ENCODE measurements at regions of chr16 and their contacts with region 1.

Region 1: GRCh38 chr16:87778830-87779579 is 13.2 kb upstream of the KLHDC4 start:
- DNase-seq: peak; percentile 90 to 91 (median 90)
- ATAC-seq: peak; percentile 90 to 94 (median 92)
- H3K4me3 ChIP-seq: peak overlapping the region in 1 of 3 donors; percentile 21
- H3K27ac ChIP-seq: peak overlapping the region in 1 of 3 donors; percentile 29
- H3K4me1 ChIP-seq: peaks cover 0 to 13% (median 4%) of the 10 kb centered on the region in 4 donors
- H3K27me3 ChIP-seq: no peaks in the 10 kb centered on the region
- CTCF ChIP-seq: peak; percentile 98 to 100 (median 98)
- POLR2A ChIP-seq: no peak

Region 2: DNA sequence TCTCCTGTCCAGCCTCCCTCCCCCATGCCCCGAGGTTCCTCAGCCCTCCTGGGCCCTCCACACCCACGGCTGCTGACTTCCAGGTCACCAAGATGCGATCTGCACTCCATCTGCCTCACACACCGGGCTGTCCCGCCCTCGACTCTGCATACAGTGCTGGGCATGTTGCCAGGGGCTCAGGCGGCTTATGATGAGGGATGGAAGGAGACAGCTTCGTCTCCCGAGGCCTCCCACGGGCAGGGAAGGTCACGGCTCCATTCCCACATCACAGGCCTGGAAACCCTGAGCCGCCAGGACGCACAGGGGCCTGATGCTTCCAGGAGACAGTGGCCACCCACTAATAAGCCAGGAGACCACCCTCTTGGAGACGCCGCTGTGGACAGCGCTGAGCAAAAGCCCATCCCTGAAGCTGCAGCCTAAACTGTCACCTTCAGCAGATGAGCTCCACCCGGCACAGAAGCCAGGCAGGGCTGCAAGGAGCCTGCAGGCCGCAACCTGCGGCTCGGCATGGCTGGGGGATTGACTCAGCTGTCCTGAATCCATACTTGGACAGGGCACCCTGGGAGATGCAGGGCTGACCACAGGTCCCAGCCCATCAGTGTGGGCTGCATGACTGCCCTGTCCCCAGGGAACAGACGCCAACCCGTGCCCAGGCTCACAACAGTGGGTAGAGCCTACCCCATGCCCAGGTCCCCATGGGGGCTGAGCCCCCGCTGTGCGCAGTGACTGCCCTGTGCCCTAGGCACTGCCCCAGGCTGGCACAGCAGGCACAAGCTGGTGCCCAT is 55.8 kb after region 1 on chr16:
- intact Hi-C with region 1: loop called in 1 of 2 experiments (anchors 10 kb)
- DNase-seq: peak in 1 of 3 donors; percentile 66
- ATAC-seq: no peak
- H3K4me3 ChIP-seq: no peak overlapping the region
- H3K27ac ChIP-seq: peak overlapping the region in 1 of 3 donors; percentile 13
- H3K4me1 ChIP-seq: peaks cover 0 to 9% (median 3%) of the 10 kb centered on the region in 4 donors
- H3K27me3 ChIP-seq: no peaks in the 10 kb centered on the region
- CTCF ChIP-seq: no peak
- POLR2A ChIP-seq: no peak

Region 3: DNA sequence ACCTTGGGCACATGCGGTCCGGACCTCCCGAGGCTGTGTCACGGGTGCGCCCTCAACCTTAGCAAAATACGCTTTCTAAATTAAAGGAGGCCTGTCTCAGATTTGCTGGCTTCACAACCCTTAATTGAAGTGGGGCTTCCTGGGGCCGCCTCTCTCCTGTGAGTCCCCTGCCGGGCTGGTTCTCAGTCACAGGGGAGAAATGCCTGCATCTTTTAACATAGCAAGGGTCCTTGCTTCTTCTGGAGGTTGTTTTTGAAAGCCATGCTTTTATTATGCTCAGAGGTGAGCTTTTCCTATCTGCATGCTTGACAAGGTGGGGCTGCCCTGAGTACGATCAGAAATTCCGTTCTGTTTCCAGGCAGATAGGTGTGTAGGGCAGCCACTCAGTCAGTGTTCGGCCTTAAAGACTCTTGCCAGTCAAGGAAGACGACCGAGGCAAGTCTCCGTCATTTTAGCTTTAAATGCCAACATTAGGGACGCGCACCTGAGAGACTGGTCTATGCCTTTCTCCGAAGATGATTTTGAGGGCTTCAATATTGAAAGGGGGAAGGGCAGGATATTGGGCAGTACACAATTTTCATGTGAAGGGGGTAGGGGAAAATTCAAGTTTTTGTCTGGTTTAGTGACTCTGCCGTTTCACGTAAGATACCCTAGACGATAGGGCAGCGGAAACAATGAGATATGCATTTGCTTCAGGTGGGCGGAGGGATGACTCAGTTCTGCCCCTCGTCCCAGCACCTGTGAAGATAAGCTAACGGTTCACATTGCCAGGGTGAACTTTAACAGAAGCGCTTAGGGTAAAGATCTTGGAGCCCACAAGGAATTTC is 95.8 kb after region 1 on chr16:
- intact Hi-C with region 1: loop called (anchors 5 kb)
- DNase-seq: no peak
- ATAC-seq: no peak
- H3K4me3 ChIP-seq: no peak overlapping the region
- H3K27ac ChIP-seq: no peak overlapping the region
- H3K4me1 ChIP-seq: peaks cover 0 to 4% (median 0%) of the 10 kb centered on the region in 4 donors
- H3K27me3 ChIP-seq: no peaks in the 10 kb centered on the region
- CTCF ChIP-seq: no peak
- POLR2A ChIP-seq: no peak

Measured in right lobe of liver (tissue), 6 donors.